B cell (primary cell): ENCODE measurements at regions of chr6 and their contacts with region 1.

Region 1: DNA sequence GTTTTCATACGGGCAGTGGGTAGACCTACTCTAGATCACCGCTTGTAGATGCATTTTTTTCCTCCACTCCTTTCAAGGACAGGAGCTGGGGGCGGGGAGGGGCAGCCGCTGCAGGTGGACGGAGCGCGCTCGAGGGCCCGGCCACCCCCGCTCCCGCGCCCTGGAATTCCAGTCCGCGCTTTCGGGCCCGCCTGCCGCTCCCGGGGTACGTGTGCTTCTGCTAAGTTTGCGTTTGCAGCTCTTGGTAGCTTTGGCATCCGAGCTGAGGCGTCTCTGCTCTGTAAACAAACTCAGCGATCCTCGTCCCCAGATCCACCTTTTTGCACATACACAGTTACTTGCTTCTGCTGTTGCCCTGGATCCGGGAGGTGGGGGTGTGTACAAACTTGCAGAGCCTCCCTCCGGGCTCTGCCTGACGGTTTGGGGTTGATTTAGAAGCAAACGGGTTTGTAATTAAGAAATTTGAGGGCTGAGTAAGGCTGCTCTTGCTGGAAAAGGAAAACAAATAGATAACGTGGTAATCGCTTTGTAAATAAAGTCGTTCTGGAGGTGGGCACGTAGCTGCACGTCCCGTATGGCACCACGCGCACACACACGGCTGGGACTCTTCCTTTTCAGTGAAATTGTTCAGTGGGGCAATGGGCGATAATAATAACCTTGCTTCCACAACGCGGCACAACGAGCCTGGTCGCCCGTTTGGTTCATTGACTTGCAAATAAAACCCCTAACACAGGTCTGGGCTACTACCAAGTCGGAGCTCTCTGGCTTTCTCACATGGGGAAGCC is 976 bp upstream of the CITED2 start:
- DNase-seq: peak; percentile 91
- ATAC-seq: peak; percentile 53
- H3K4me3 ChIP-seq: peak overlapping the region; percentile 91 to 99 (median 97)
- H3K4me3 Mint-ChIP-seq: peak overlapping the region; percentile 100
- H3K27ac ChIP-seq: peak overlapping the region; percentile 73 to 81
- H3K27ac Mint-ChIP-seq: peak overlapping the region; percentile 100
- H3K4me1 ChIP-seq: peaks cover 9 to 17% of the 10 kb centered on the region in 2 donors
- H3K4me1 Mint-ChIP-seq: peaks cover 23% of the 10 kb centered on the region
- H3K27me3 ChIP-seq: no peaks in the 10 kb centered on the region
- H3K27me3 Mint-ChIP-seq: no peaks in the 10 kb centered on the region
- CTCF ChIP-seq: no peak

Region 2: GRCh38 chr6:138588805-138589434 is 786.5 kb before region 1 on chr6:
- CTCF ChIA-PET with region 1: no interaction called
- POLR2A ChIA-PET with region 1: no interaction called
- intact Hi-C with region 1: loop called (anchors 5 kb)
- DNase-seq: peak; percentile 76
- ATAC-seq: peak; percentile 68
- H3K4me3 ChIP-seq: no peak overlapping the region
- H3K4me3 Mint-ChIP-seq: no peak overlapping the region
- H3K27ac ChIP-seq: no peak overlapping the region
- H3K27ac Mint-ChIP-seq: no peak overlapping the region
- H3K4me1 ChIP-seq: peaks cover 12 to 13% of the 10 kb centered on the region in 2 donors
- H3K4me1 Mint-ChIP-seq: peaks cover 20% of the 10 kb centered on the region
- H3K27me3 ChIP-seq: no peaks in the 10 kb centered on the region
- H3K27me3 Mint-ChIP-seq: no peaks in the 10 kb centered on the region
- CTCF ChIP-seq: peak; percentile 92

Region 3: DNA sequence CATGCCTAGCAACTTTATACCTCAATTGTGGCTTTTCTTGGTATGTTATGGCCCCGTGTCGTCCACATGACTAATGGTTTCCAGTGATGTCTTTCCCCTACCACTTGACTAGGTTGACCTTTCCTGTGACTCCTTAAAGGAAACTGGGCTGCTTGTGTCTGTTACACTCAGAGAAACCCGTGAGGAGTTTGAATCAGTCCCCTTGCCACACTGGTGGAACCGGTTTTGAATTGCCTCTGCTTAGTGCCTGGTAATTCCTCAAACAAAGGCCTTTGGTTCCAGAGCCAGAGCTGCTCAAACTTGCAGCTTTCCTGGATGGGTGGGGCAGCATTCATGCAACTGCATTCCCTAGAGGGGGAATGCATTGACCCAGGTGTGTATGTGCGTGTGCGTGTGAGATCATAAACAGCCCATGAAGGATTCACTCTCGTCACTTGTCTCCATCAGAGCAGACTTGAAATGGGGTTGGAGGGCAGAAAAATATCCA is 557.6 kb before region 1 on chr6:
- CTCF ChIA-PET with region 1: interaction called, 12 read pairs
- POLR2A ChIA-PET with region 1: no interaction called
- intact Hi-C with region 1: no loop called
- DNase-seq: peak; percentile 13
- ATAC-seq: peak; percentile 15
- H3K4me3 ChIP-seq: no peak overlapping the region
- H3K4me3 Mint-ChIP-seq: no peak overlapping the region
- H3K27ac ChIP-seq: peak overlapping the region in 1 of 2 donors; percentile 28
- H3K27ac Mint-ChIP-seq: peak overlapping the region; percentile 68
- H3K4me1 ChIP-seq: peaks cover 11 to 20% of the 10 kb centered on the region in 2 donors
- H3K4me1 Mint-ChIP-seq: peaks cover 30% of the 10 kb centered on the region
- H3K27me3 ChIP-seq: no peaks in the 10 kb centered on the region
- H3K27me3 Mint-ChIP-seq: no peaks in the 10 kb centered on the region
- CTCF ChIP-seq: no peak

Region 4: GRCh38 chr6:138833816-138834539 is 541.4 kb before region 1 on chr6:
- CTCF ChIA-PET with region 1: no interaction called
- POLR2A ChIA-PET with region 1: no interaction called
- intact Hi-C with region 1: no loop called
- DNase-seq: no peak
- ATAC-seq: no peak
- H3K4me3 ChIP-seq: no peak overlapping the region
- H3K4me3 Mint-ChIP-seq: no peak overlapping the region
- H3K27ac ChIP-seq: no peak overlapping the region
- H3K27ac Mint-ChIP-seq: no peak overlapping the region
- H3K4me1 ChIP-seq: no peaks in the 10 kb centered on the region
- H3K4me1 Mint-ChIP-seq: no peaks in the 10 kb centered on the region
- H3K27me3 ChIP-seq: no peaks in the 10 kb centered on the region
- H3K27me3 Mint-ChIP-seq: no peaks in the 10 kb centered on the region
- CTCF ChIP-seq: no peak

Region 5: DNA sequence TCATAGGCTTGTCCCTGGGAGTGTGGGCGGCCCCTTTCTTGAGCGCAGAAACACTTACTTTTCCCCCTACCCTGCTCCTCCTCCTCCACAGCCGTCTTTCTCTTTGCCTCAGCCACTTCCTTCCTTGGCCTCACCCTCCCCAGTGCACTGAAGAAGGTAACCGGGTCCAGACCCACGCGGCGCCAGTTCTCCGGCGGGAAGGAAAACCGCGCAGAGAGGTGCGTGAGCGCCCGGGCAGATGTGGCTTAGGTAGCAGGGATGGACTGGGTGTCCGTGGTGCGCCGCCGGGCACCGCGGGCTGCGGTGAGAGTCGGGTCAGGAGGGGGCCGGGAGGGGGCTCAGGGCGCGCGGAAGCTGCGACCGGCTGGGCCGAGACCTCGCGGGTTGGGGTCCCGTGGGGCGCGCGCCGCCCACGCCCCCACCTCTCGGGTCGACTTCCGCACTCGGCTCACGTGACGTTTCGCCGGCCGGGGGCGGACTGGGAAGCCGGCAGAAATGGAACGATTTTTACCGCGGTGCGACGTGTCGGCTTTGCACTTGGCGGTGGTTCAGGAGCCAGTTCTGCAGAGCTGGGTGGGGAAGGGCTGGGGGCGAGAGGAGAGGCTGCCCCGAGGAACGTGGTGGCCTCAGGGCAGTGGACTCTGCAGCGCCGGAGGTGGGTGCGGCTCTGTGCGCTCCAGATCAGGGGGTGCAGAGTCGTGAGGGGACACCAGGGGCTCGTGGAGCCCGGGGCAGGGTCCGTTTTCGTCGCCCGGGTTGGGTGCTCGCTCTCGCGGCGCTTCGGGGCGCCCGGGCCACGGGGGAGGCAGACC is 346.6 kb before region 1 on chr6 and contains the start of gene ABRACL:
- CTCF ChIA-PET with region 1: interaction called, 3 read pairs
- POLR2A ChIA-PET with region 1: interaction called, 11 read pairs
- intact Hi-C with region 1: loop called (anchors 1 kb)
- DNase-seq: peak; percentile 87
- ATAC-seq: peak; percentile 72
- H3K4me3 ChIP-seq: peak within 1 kb of the TSS; percentile 84 to 100 (median 89)
- H3K4me3 Mint-ChIP-seq: no peak within 1 kb of the TSS
- H3K27ac ChIP-seq: peak within 1 kb of the TSS; percentile 87 to 92
- H3K27ac Mint-ChIP-seq: peak within 1 kb of the TSS; percentile 94
- H3K4me1 ChIP-seq: peaks cover 27 to 28% of the 10 kb centered on the region in 2 donors
- H3K4me1 Mint-ChIP-seq: peaks cover 20% of the 10 kb centered on the region
- H3K27me3 ChIP-seq: no peaks in the 10 kb centered on the region
- H3K27me3 Mint-ChIP-seq: no peaks in the 10 kb centered on the region
- CTCF ChIP-seq: no peak
- total RNA-seq, gene ABRACL: 22.6 and 23.0 TPM in 2 replicates

Region 6: GRCh38 chr6:139134817-139135581 is 240.4 kb before region 1 on chr6 and contains the start of gene HECA:
- CTCF ChIA-PET with region 1: interaction called, 11 read pairs
- POLR2A ChIA-PET with region 1: interaction called, 20 read pairs
- intact Hi-C with region 1: loop called (anchors 1 kb)
- DNase-seq: peak; percentile 98
- ATAC-seq: peak; percentile 73
- H3K4me3 ChIP-seq: peak within 1 kb of the TSS; percentile 67 to 93 (median 87)
- H3K4me3 Mint-ChIP-seq: peak within 1 kb of the TSS; percentile 97
- H3K27ac ChIP-seq: peak within 1 kb of the TSS; percentile 88 to 94
- H3K27ac Mint-ChIP-seq: peak within 1 kb of the TSS; percentile 98
- H3K4me1 ChIP-seq: peaks cover 68 to 73% of the 10 kb centered on the region in 2 donors
- H3K4me1 Mint-ChIP-seq: peaks cover 71% of the 10 kb centered on the region
- H3K27me3 ChIP-seq: no peaks in the 10 kb centered on the region
- H3K27me3 Mint-ChIP-seq: no peaks in the 10 kb centered on the region
- CTCF ChIP-seq: no peak
- total RNA-seq, gene HECA: 50.4 and 53.0 TPM in 2 replicates

Region 7: DNA sequence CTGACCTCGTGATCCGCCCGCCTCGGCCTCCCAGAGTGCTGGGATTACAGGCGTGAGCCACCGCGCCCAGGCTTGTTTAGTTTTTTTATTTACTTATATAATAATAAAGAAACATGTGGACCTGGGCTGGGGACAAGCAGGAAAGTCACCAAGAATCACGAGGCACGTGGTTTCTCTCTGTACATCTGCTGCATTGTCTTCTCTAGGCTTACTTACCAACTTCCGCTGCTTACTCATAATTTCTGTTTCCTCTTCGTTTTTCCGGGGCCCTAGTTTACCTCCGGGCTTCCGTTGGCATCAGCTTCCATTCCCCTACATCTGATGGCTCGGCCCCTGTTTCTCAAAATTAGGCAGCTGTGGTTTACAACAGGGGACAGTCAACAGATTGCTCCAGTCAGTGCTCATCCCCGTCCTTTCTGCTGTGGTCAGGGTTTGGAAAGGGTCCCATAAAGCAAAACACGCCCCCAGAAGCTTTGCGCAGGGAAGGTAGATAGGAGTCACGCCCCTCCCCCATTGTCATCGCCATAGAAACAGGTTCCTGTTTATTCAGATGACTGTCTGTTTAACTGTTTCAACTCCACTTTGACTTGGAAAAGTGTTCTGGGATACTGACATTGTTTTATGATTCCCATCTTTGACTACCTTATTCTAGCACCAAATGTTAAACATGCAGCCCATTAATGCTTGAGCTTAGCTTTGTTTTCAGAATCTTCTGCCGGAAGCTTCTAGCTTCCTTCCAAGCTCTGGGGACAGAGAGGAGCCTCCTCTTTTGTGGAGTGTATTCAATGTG is 51.7 kb before region 1 on chr6:
- CTCF ChIA-PET with region 1: interaction called, 8 read pairs
- POLR2A ChIA-PET with region 1: interaction called, 10 read pairs
- intact Hi-C with region 1: loop called (anchors 1 kb)
- DNase-seq: peak; percentile 88
- ATAC-seq: peak; percentile 74
- H3K4me3 ChIP-seq: peak overlapping the region; percentile 56 to 81 (median 67)
- H3K4me3 Mint-ChIP-seq: peak overlapping the region; percentile 92
- H3K27ac ChIP-seq: peak overlapping the region; percentile 83 to 92
- H3K27ac Mint-ChIP-seq: peak overlapping the region; percentile 98
- H3K4me1 ChIP-seq: peaks cover 30 to 42% of the 10 kb centered on the region in 2 donors
- H3K4me1 Mint-ChIP-seq: peaks cover 37% of the 10 kb centered on the region
- H3K27me3 ChIP-seq: no peaks in the 10 kb centered on the region
- H3K27me3 Mint-ChIP-seq: no peaks in the 10 kb centered on the region
- CTCF ChIP-seq: no peak